ENCODE measurements at regions of chr17 and their contacts with region 1.

Region 1: GRCh38 chr17:8138672-8139371 is 13.4 kb downstream of the PER1 start:
- DNase-seq: peak; percentile 91
- CTCF ChIP-seq: peak; percentile 67

Region 2: GRCh38 chr17:7782237-7782636 is 356.6 kb before region 1 on chr17:
- CTCF ChIA-PET with region 1: no interaction called
- POLR2A ChIA-PET with region 1: no interaction called
- DNase-seq: no peak
- CTCF ChIP-seq: peak; percentile 14

Region 3: DNA sequence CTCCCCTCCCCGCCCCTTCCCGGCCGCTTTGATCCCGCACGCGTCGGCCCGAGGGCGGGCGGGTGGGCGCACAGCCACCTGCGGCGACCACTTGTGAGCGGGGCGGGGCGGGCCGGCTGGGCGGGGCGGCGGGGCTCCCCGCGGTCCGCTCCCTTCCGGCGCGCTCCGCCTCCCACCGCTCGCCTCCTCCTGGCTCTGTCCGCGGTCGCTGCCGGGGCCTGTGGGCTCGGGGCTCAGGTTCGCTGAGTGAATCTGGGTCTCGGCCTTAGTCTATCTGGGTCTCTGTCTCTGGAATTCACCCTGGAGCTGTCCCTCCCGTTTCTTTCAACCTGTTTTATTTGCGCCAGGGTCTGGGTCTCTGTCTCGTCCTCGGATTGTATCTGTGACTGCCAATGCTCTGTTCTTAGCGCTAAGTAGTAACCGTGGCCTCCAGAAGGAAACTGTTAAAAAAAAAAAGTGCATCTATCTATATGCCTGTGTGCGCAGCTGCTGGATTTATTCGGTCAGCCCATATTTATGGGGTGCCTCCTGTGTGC is 12.2 kb before region 1 on chr17:
- CTCF ChIA-PET with region 1: interaction called, 50 read pairs
- POLR2A ChIA-PET with region 1: interaction called, 6 read pairs
- DNase-seq: peak; percentile 75
- CTCF ChIP-seq: no peak

Region 4: DNA sequence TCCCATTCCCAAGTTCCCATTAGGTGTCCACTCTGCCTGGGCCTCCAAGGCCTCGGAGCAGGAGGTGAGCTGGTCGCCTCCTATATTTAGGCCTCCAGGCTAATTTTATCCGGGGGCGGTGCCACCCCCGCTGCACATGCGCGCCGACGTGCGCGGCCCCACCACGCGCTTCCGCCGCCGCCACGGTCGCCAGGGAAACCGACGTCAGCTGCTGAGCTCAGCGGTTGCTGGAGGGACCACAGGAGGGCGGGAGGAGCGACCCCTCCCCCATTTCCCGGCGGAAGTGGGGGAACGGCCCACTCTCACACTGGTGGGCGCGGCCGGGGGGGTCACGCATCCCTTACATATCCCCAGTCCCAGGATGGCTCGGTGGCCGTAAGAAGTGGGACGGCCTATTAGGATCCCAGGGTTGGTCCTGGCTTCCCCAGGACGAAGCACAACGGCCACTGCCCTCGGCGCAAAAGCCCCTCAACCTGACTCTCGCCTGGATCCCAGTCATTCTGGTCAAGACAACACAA is 12.4 kb after region 1 on chr17:
- CTCF ChIA-PET with region 1: interaction called, 67 read pairs
- POLR2A ChIA-PET with region 1: interaction called, 37 read pairs
- DNase-seq: peak; percentile 90
- CTCF ChIP-seq: no peak